ENCODE measurements at regions of chr1 and their contacts with region 1.

Region 1: DNA sequence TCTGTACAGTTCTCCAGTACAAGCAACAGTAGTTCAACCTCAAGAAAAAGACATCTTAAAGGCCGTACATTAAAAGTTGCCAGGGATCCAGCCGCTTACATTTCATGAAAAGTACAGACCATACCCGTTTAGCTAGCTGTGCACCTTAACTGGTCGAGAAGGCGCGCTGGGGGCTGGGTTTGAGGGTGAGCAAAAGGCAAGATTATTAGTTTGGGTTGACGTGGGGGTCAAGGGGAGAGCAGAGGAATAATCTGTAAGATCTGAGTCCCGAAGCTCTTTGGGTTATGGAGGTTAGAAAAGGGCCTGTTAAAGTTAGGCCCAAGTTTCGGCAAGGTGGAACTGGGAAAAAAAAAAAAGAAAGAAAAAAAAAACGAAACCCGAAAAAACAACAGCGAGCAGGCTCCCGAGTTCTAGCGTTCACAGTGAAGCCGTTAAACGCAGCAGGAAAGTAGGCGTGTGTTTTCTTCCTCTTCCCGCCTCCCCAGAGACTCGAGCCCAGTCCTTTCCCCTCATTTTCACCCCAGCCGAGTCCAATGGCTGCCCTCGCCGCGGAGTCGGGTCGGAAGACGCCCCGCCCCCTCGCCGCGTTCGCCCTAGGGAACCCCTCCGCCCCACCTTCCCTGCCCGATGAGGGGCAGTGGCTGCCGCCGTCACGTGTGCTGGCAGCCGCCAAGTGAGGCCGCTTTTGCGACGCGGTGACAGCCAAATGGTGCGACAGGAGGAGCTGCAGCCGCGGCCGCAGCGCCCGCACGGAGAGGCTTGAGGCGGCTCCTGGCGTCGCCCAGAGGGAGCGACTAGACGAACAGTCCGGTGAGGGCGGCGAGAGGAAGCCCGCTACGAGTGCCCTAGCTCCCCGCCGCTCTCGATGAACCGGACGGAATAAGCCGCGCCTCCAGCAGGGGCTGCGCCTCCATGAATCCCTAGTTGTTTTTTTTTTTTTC is at the start of gene PKN2:
- DNase-seq: peak; percentile 94 to 98 (median 97)
- ATAC-seq: peak; percentile 96
- H3K4me3 ChIP-seq: peak within 1 kb of the TSS; percentile 91
- H3K4me3 Mint-ChIP-seq: peak within 1 kb of the TSS; percentile 89 to 99 (median 97)
- H3K27ac ChIP-seq: peak within 1 kb of the TSS; percentile 89
- H3K27ac Mint-ChIP-seq: peak within 1 kb of the TSS; percentile 96 to 100 (median 97)
- H3K4me1 ChIP-seq: peaks cover 18 to 19% of the 10 kb centered on the region in 2 donors
- H3K4me1 Mint-ChIP-seq: peaks cover 18 to 53% (median 36%) of the 10 kb centered on the region in 7 donors
- H3K27me3 ChIP-seq: no peaks in the 10 kb centered on the region
- H3K27me3 Mint-ChIP-seq: peaks cover 0 to 12% (median 0%) of the 10 kb centered on the region in 5 donors
- total RNA-seq, gene PKN2: 32.1 to 53.8 (median 46.9) TPM

Region 2: DNA sequence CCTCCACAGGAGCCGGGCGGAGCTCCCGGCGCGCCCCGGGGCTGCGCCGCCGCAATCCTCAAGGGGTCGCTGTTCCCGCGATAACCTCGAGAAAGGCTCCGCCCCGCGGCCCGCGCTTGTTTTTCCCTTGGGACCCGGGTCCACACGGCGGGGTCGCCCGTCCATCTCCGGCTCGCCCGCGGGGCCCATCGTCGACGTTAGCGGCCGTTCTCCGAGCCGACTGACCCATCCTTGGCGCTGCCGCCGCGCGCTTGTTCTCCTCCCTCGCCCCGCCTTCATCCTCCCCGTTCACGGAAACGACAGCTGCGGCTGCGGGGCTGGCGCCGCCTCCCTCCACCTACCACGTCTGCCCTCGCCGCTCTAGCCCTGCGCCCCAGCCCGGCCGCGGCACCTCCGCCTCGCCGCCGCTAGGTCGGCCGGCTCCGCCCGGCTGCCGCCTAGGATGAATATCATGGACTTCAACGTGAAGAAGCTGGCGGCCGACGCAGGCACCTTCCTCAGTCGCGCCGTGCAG is 1979.3 kb before region 1 on chr1 and contains the start of gene SH3GLB1:
- CTCF ChIA-PET with region 1: no interaction called
- POLR2A ChIA-PET with region 1: no interaction called
- intact Hi-C with region 1: loop called in 1 of 2 experiments (anchors 10 kb)
- DNase-seq: peak; percentile 83 to 93 (median 92)
- ATAC-seq: peak; percentile 93
- H3K4me3 ChIP-seq: peak within 1 kb of the TSS; percentile 83
- H3K4me3 Mint-ChIP-seq: peak within 1 kb of the TSS; percentile 95 to 99 (median 97)
- H3K27ac ChIP-seq: peak within 1 kb of the TSS; percentile 86
- H3K27ac Mint-ChIP-seq: peak within 1 kb of the TSS; percentile 96 to 99 (median 97)
- H3K4me1 ChIP-seq: peaks cover 16 to 17% of the 10 kb centered on the region in 2 donors
- H3K4me1 Mint-ChIP-seq: peaks cover 34 to 67% (median 56%) of the 10 kb centered on the region in 7 donors
- H3K27me3 ChIP-seq: no peaks in the 10 kb centered on the region
- H3K27me3 Mint-ChIP-seq: no peaks in the 10 kb centered on the region
- total RNA-seq, gene SH3GLB1: 36.7 to 72.0 (median 49.8) TPM

Region 3: DNA sequence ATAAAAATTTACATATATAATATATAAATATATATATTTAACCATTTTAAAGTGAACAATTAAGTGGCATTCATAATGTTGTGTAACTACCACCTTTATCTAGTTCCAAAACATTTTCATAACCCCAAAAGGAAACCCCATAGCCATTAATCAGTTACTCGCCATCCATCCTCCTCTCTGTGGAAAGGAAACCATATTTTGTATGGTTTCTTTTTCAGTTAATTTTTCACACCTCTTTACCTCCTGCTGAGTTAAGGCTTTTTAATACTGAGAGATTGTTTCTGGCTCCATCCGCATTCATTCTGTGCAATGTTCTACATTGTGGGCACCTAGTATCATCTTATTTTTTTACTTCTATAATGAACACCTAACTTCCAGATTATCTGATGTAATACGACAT is 843.0 kb before region 1 on chr1:
- CTCF ChIA-PET with region 1: no interaction called
- POLR2A ChIA-PET with region 1: no interaction called
- intact Hi-C with region 1: no loop called
- DNase-seq: no peak
- ATAC-seq: no peak
- H3K4me3 ChIP-seq: no peak overlapping the region
- H3K4me3 Mint-ChIP-seq: no peak overlapping the region
- H3K27ac ChIP-seq: no peak overlapping the region
- H3K27ac Mint-ChIP-seq: no peak overlapping the region
- H3K4me1 ChIP-seq: no peaks in the 10 kb centered on the region
- H3K4me1 Mint-ChIP-seq: no peaks in the 10 kb centered on the region
- H3K27me3 ChIP-seq: no peaks in the 10 kb centered on the region
- H3K27me3 Mint-ChIP-seq: peaks cover 0 to 22% (median 6%) of the 10 kb centered on the region in 5 donors

Region 4: DNA sequence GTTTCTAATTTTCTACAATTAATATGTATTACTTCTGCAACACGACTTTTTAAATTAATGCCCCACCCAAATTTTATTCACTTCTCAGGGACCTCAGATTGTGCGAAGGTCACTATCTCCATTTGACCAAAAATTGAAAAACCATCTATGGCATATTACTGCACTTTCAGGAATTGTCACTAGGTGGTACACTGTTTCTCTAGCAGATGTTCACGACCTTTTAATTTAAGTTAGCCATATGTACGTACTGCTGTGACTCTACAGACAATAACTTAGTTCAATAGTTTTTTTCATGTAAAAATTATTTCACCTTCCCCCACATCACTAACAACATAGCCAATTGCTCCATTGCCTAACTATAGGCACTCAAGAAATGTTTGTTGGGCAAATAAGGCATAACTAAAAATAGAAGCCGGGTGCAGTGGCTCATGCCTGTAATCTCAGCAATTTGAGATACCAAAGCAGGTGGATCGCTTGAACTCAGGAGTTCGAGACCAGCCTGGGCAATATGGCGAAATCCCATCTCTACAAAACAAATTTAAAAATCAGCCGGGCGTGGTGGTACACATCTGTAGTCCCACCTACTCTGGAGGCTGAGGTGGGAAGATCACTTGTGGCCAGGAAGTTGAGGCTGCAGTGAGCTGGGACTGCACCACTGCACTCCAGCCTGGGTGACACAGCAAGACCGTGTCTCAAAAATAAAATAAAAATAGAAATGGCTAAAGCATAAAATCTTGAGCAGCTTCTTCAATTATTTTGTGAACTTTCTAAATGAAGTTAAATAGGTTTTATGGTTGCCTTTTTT is 75.5 kb before region 1 on chr1:
- CTCF ChIA-PET with region 1: no interaction called
- POLR2A ChIA-PET with region 1: no interaction called
- intact Hi-C with region 1: loop called in 1 of 2 experiments (anchors 1 kb)
- DNase-seq: peak in 6 of 9 donors; percentile 2 to 38 (median 14)
- ATAC-seq: peak; percentile 60
- H3K4me3 ChIP-seq: no peak overlapping the region
- H3K4me3 Mint-ChIP-seq: peak overlapping the region in 1 of 10 donors; percentile 1
- H3K27ac ChIP-seq: no peak overlapping the region
- H3K27ac Mint-ChIP-seq: no peak overlapping the region
- H3K4me1 ChIP-seq: no peaks in the 10 kb centered on the region
- H3K4me1 Mint-ChIP-seq: no peaks in the 10 kb centered on the region
- H3K27me3 ChIP-seq: no peaks in the 10 kb centered on the region
- H3K27me3 Mint-ChIP-seq: peaks cover 0 to 9% (median 5%) of the 10 kb centered on the region in 5 donors

Region 5: GRCh38 chr1:88661951-88662699 is 21.7 kb before region 1 on chr1:
- CTCF ChIA-PET with region 1: interaction called, 28 read pairs
- POLR2A ChIA-PET with region 1: interaction called, 21 read pairs
- intact Hi-C with region 1: loop called (anchors 1 kb)
- DNase-seq: no peak
- ATAC-seq: no peak
- H3K4me3 ChIP-seq: no peak overlapping the region
- H3K4me3 Mint-ChIP-seq: peak overlapping the region in 7 of 10 donors; percentile 12 to 85 (median 74)
- H3K27ac ChIP-seq: peak overlapping the region; percentile 56
- H3K27ac Mint-ChIP-seq: peak overlapping the region in 8 of 9 donors; percentile 65 to 94 (median 82)
- H3K4me1 ChIP-seq: peaks cover 0 to 10% of the 10 kb centered on the region in 2 donors
- H3K4me1 Mint-ChIP-seq: peaks cover 11 to 42% (median 36%) of the 10 kb centered on the region in 7 donors
- H3K27me3 ChIP-seq: no peaks in the 10 kb centered on the region
- H3K27me3 Mint-ChIP-seq: no peaks in the 10 kb centered on the region

Region 6: GRCh38 chr1:88891318-88891950 is 207.6 kb after region 1 on chr1 and contains the start of gene GTF2B:
- CTCF ChIA-PET with region 1: no interaction called
- POLR2A ChIA-PET with region 1: interaction called, 18 read pairs
- intact Hi-C with region 1: loop called (anchors 1 kb)
- DNase-seq: peak; percentile 86 to 96 (median 94)
- ATAC-seq: peak; percentile 97
- H3K4me3 ChIP-seq: peak within 1 kb of the TSS; percentile 86
- H3K4me3 Mint-ChIP-seq: peak within 1 kb of the TSS; percentile 87 to 99 (median 95)
- H3K27ac ChIP-seq: peak within 1 kb of the TSS; percentile 91
- H3K27ac Mint-ChIP-seq: peak within 1 kb of the TSS; percentile 93 to 98 (median 97)
- H3K4me1 ChIP-seq: peaks cover 26 to 27% of the 10 kb centered on the region in 2 donors
- H3K4me1 Mint-ChIP-seq: peaks cover 23 to 59% (median 48%) of the 10 kb centered on the region in 7 donors
- H3K27me3 ChIP-seq: no peaks in the 10 kb centered on the region
- H3K27me3 Mint-ChIP-seq: peaks cover 0 to 2% (median 0%) of the 10 kb centered on the region in 5 donors
- total RNA-seq, gene GTF2B: 41.3 to 53.6 (median 47.3) TPM

Region 7: GRCh38 chr1:89125913-89126580 is 442.2 kb after region 1 on chr1 and contains the start of gene GBP2:
- CTCF ChIA-PET with region 1: no interaction called
- POLR2A ChIA-PET with region 1: no interaction called
- intact Hi-C with region 1: loop called in 1 of 2 experiments (anchors 2 kb)
- DNase-seq: peak in 7 of 9 donors; percentile 35 to 72 (median 42)
- ATAC-seq: peak; percentile 82
- H3K4me3 ChIP-seq: peak within 1 kb of the TSS; percentile 84
- H3K4me3 Mint-ChIP-seq: peak within 1 kb of the TSS; percentile 88 to 100 (median 98)
- H3K27ac ChIP-seq: peak within 1 kb of the TSS; percentile 76
- H3K27ac Mint-ChIP-seq: peak within 1 kb of the TSS; percentile 94 to 100 (median 99)
- H3K4me1 ChIP-seq: peaks cover 30 to 32% of the 10 kb centered on the region in 2 donors
- H3K4me1 Mint-ChIP-seq: peaks cover 39 to 75% (median 63%) of the 10 kb centered on the region in 7 donors
- H3K27me3 ChIP-seq: no peaks in the 10 kb centered on the region
- H3K27me3 Mint-ChIP-seq: peaks cover 0 to 2% (median 0%) of the 10 kb centered on the region in 5 donors
- total RNA-seq, gene GBP2: 74.0 to 200 (median 185) TPM

Region 8: DNA sequence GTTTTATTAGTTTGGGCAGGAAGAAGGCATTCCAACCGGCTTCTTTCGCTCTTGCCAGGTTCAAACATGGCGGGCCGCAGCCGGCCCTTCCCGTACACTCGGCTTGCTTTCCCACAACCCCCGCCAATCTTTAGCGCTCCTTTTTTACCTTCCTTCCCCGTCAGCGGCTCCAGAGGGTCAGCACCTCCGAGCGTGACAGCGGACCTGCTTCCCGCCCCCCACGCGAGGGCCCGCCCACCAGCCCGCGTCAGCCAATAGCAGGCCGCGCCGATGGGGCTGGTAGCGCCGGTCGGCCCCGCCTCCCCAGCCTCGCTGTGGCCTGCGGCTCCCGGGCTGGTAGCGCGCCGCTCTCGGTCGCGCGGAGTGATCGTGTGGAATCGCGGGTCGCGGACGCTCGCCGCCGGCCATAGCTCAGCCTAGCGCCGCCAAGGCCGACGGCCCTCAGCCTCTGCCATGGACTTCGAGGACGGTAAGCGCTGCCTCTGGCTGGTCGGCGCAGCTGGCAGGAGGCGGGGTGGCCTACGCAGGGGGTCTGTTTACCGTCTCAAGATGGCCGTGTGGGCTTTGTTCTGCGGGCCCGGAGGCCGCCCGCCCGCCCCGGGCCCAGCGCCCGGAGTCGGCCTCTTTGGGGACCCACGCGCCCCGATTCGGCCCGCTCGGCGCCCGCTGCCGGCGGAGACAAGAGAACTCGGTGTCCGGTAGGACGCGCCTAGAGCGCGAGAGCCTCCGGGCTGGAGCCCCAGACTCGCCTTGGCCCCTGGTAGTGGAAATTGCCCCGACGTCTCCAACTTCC is 1311.2 kb after region 1 on chr1 and contains the start of gene ZNF326:
- CTCF ChIA-PET with region 1: interaction called, 3 read pairs
- POLR2A ChIA-PET with region 1: no interaction called
- intact Hi-C with region 1: loop called (anchors 1 kb)
- DNase-seq: peak; percentile 88 to 99 (median 93)
- ATAC-seq: peak; percentile 98
- H3K4me3 ChIP-seq: peak within 1 kb of the TSS; percentile 86
- H3K4me3 Mint-ChIP-seq: peak within 1 kb of the TSS; percentile 91 to 100 (median 99)
- H3K27ac ChIP-seq: peak within 1 kb of the TSS; percentile 85
- H3K27ac Mint-ChIP-seq: peak within 1 kb of the TSS; percentile 90 to 98 (median 96)
- H3K4me1 ChIP-seq: peaks cover 8 to 14% of the 10 kb centered on the region in 2 donors
- H3K4me1 Mint-ChIP-seq: peaks cover 28 to 47% (median 43%) of the 10 kb centered on the region in 7 donors
- H3K27me3 ChIP-seq: no peaks in the 10 kb centered on the region
- H3K27me3 Mint-ChIP-seq: peaks cover 0 to 7% (median 4%) of the 10 kb centered on the region in 5 donors
- total RNA-seq, gene ZNF326: 17.3 to 52.5 (median 23.5) TPM

Measured in naive thymus-derived CD4-positive, alpha-beta T cell (primary cell).